ENCODE measurements at regions of chr12 and their contacts with region 1.

Region 1: DNA sequence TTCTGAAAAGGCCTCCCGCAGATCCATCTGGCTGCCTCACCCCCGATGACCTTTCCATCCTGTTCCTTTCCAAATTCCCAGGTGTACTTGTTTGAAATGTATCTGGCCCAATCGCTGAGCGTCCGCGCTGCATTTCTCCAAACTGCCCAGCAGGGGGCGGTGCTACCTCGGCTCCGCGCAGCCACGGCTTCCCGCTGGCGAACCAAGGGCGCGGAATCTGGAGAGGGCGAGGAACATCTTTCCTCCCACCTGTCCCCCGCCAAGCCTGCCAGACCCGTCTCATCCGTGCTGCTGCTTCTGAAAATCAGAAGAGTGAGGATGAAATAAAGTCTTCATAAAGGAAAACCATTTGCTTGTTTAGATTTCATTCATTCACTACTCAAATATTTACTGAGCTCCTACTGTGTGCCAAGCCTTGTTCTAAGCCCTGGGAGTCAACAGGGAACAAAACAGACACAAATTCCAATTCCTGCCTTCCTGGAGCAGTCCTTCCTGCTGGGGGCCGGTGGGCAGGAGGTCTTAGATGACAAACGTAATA is 16.8 kb upstream of the MYL2 start:
- DNase-seq: peak; percentile 46 to 74 (median 72)
- ATAC-seq: peak; percentile 55 to 67
- H3K4me3 ChIP-seq: no peak overlapping the region
- H3K27ac ChIP-seq: no peak overlapping the region
- H3K4me1 ChIP-seq: no peaks in the 10 kb centered on the region
- H3K27me3 ChIP-seq: peaks cover 2% of the 10 kb centered on the region

Region 2: GRCh38 chr12:111242184-111242583 is 305.0 kb after region 1 on chr12:
- intact Hi-C with region 1: no loop called
- DNase-seq: no peak
- ATAC-seq: no peak
- H3K4me3 ChIP-seq: no peak overlapping the region
- H3K27ac ChIP-seq: no peak overlapping the region
- H3K4me1 ChIP-seq: no peaks in the 10 kb centered on the region
- H3K27me3 ChIP-seq: no peaks in the 10 kb centered on the region

Region 3: DNA sequence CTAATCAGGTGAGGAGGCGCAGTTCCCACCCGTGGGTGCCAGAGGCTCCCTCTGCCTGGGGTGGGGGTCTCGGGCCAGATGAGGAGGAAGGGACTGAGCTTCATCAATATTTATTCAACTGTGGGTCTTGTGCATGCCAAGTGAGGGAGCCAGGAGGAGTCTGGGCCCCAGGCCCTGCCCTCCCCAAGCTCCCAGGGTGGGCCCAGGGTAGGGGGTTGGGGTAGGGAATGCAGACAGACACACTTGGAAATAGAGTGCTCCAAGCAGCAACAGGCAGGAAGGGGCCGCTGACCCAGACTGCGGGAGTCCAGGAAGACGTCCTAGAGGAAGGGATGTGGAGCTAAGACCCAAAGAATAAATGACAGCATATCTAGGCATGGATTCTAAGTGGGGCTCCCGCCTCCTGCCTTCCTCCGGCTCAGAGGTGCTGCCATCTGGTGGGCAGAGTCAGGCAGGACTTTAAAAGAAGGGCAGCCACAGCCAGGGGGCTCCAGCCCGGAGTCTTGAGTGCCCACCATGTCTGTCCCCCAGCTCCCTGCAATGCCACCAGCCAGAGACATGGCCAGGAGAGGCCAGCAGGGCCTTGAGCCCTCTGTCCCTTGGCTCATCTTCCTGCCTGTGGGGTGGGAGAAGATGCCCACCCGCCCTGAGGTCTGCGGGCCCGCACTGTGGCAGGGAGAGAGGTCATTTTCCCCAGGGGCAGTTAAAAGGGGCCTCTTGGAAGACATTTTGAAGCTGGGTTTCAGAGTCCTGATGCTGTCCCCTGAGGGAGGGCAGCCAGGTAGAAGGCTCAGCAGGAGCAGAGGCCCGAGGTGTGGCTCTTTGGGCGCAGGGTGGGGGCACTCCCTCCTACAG is 361.6 kb after region 1 on chr12:
- intact Hi-C with region 1: loop called (anchors 5 to 10 kb)
- DNase-seq: peak; percentile 34 to 69 (median 66)
- ATAC-seq: peak; percentile 15 to 63
- H3K4me3 ChIP-seq: no peak overlapping the region
- H3K27ac ChIP-seq: no peak overlapping the region
- H3K4me1 ChIP-seq: no peaks in the 10 kb centered on the region
- H3K27me3 ChIP-seq: no peaks in the 10 kb centered on the region

Region 4: DNA sequence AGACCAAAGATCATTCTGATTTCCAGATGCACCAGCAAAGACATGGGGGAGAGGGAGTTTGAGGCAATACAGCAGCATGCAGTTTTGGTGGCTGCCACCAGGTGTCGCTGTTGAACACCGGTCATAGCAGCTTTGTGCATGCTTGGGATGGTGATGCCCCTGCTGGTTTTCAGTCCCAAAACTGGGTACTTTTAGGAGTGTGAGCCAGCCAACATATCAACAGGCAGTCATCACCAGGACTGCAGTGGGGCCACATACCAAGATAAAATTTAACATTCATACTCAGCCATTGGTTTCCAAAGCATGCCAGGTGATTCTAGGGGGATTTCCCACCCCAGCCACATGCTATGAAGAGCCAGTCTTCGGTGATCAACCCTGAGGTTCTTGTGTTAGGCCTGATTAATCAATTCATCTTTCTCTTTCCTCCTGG is 367.5 kb after region 1 on chr12:
- intact Hi-C with region 1: loop called (anchors 5 to 10 kb)
- DNase-seq: no peak
- ATAC-seq: no peak
- H3K4me3 ChIP-seq: no peak overlapping the region
- H3K27ac ChIP-seq: no peak overlapping the region
- H3K4me1 ChIP-seq: no peaks in the 10 kb centered on the region
- H3K27me3 ChIP-seq: no peaks in the 10 kb centered on the region

Region 5: GRCh38 chr12:111313833-111314259 is 376.7 kb after region 1 on chr12:
- intact Hi-C with region 1: loop called in 3 of 4 experiments (anchors 5 to 10 kb)
- DNase-seq: peak; percentile 73 to 87 (median 84)
- ATAC-seq: peak; percentile 54 to 70
- H3K4me3 ChIP-seq: no peak overlapping the region
- H3K27ac ChIP-seq: no peak overlapping the region
- H3K4me1 ChIP-seq: no peaks in the 10 kb centered on the region
- H3K27me3 ChIP-seq: no peaks in the 10 kb centered on the region

Measured in right cardiac atrium (tissue), 5 donors.